Activated CD4-positive, alpha-beta memory T cell treated with anti-CD3 and anti-CD28 coated beads, Interleukin-2, amount 10 ng/mL, durations not matched to agents 7 days and 5 days (primary cell): ENCODE measurements at regions of chr5 and their contacts with region 1.

Region 1: DNA sequence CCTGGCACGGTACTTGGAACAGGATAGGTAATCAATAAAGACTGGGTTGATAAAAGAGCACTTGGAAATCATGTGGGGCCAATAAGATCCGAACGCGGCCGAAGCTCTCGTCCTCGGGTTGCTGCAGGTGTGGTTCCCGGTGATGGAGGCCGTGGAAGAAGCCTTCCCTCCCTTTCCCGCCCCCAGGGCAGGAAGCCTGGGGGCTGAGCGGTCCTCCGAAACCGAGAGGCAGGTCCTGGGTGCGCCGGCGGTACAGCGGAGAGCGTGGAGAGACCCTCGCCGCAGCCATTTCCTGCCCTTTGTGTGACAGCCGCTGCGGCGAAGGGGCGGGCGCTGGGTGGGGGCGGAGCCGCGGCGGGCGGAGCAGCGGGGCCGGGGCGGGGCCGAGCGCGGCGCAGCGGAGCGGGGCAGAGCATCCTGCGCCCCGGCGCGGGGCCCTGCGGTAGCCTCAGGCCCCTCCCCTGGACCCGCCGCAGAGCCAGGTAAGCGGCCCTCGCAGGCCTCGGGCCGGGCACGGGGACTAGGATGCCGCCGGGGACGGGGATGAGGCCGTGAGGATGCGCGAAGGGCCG is at the start of gene CYFIP2:
- DNase-seq: peak; percentile 91
- H3K4me3 Mint-ChIP-seq: peak within 1 kb of the TSS; percentile 98
- H3K27ac Mint-ChIP-seq: peak within 1 kb of the TSS; percentile 97
- H3K4me1 Mint-ChIP-seq: peaks cover 66% of the 10 kb centered on the region
- H3K27me3 Mint-ChIP-seq: no peaks in the 10 kb centered on the region
- total RNA-seq, gene CYFIP2: 337 to 354 TPM

Region 2: DNA sequence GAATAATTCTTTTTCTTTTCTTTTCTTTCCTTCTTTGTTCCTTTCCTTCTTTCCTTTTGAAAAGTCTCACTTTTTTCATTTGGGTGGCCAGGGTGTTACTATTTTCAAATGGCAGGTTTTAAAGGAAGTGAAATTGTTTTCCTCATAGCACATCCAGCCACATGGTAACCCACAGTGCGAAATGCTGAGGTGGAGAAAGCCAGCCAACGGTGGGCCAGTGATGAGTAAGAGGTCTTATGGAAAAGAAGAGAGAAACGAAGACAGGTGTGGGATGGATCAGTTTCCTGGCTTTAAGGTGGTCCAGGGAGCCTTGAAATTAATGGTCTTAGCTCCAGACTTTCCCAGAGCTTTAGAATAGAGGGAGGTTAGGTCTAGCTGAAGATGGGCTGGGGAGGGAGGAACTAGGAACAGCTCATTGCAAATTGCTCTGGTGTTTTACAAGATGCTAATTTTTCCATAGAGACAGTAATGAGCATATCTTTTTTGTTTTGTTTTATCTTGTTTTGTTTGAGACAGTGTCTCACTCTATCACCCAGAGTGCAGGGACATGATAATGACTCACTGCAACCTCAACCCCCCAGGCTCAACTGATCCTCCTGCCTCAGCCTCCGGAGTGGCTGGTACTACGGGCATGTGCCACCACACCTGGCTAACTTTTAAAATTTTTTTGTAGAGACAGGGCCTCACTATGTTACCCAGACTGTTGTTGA is 67.4 kb before region 1 on chr5:
- CTCF ChIA-PET with region 1: no interaction called
- POLR2A ChIA-PET with region 1: interaction called, 10 read pairs
- DNase-seq: peak; percentile 58
- H3K4me3 Mint-ChIP-seq: peak overlapping the region; percentile 55
- H3K27ac Mint-ChIP-seq: peak overlapping the region; percentile 89
- H3K4me1 Mint-ChIP-seq: peaks cover 94% of the 10 kb centered on the region
- H3K27me3 Mint-ChIP-seq: no peaks in the 10 kb centered on the region

Region 3: DNA sequence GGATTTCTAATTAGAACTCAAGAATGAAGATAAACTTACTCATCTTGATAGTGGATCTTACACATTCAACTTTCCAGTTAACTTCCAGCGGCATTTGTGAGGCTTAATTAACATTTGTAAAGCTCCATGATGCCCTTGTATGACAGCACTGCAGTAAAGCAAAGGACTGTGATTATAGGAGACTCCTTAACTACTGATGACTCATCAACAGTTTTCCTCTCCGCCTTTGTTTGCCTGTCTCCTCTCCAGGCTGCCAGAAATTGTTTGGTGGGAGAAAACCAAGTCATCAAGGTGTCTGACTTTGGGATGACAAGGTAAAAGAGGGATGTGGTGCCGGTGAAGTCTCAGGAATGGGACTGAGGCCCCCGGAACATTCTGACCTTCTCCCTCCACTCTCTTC is 20.3 kb before region 1 on chr5:
- CTCF ChIA-PET with region 1: interaction called, 3 read pairs
- POLR2A ChIA-PET with region 1: interaction called, 145 read pairs
- DNase-seq: no peak
- H3K4me3 Mint-ChIP-seq: no peak overlapping the region
- H3K27ac Mint-ChIP-seq: peak overlapping the region; percentile 98
- H3K4me1 Mint-ChIP-seq: peaks cover 75% of the 10 kb centered on the region
- H3K27me3 Mint-ChIP-seq: no peaks in the 10 kb centered on the region

Region 4: DNA sequence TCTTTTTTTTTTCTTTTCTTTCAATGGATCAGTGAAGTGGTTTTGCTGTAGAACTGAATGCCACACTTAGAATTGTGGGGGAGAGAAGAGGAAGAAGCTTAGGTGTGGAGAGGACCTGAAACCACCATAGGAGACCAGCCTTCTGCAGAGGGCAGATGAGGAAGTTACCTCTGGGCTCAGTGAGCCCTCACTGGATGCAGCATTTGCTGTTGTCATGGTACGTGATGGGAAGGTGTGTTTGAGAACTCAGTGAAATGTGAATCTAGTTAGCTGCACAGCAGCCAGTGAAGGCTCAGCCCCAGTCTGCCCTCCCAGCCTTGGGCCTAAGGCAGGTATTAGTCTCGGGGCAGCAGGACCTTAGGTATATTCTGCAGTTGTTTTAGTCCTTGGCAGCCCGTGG is 17.6 kb after region 1 on chr5:
- CTCF ChIA-PET with region 1: no interaction called
- POLR2A ChIA-PET with region 1: interaction called, 19 read pairs
- DNase-seq: peak; percentile 29
- H3K4me3 Mint-ChIP-seq: no peak overlapping the region
- H3K27ac Mint-ChIP-seq: peak overlapping the region; percentile 41
- H3K4me1 Mint-ChIP-seq: peaks cover 66% of the 10 kb centered on the region
- H3K27me3 Mint-ChIP-seq: no peaks in the 10 kb centered on the region

Region 5: GRCh38 chr5:157303667-157304327 is 38.0 kb after region 1 on chr5:
- CTCF ChIA-PET with region 1: interaction called, 4 read pairs
- POLR2A ChIA-PET with region 1: interaction called, 10 read pairs
- DNase-seq: peak; percentile 65
- H3K4me3 Mint-ChIP-seq: peak overlapping the region; percentile 60
- H3K27ac Mint-ChIP-seq: peak overlapping the region; percentile 93
- H3K4me1 Mint-ChIP-seq: peaks cover 64% of the 10 kb centered on the region
- H3K27me3 Mint-ChIP-seq: no peaks in the 10 kb centered on the region